ENCODE measurements at regions of chr2 and their contacts with region 1.

Region 1: DNA sequence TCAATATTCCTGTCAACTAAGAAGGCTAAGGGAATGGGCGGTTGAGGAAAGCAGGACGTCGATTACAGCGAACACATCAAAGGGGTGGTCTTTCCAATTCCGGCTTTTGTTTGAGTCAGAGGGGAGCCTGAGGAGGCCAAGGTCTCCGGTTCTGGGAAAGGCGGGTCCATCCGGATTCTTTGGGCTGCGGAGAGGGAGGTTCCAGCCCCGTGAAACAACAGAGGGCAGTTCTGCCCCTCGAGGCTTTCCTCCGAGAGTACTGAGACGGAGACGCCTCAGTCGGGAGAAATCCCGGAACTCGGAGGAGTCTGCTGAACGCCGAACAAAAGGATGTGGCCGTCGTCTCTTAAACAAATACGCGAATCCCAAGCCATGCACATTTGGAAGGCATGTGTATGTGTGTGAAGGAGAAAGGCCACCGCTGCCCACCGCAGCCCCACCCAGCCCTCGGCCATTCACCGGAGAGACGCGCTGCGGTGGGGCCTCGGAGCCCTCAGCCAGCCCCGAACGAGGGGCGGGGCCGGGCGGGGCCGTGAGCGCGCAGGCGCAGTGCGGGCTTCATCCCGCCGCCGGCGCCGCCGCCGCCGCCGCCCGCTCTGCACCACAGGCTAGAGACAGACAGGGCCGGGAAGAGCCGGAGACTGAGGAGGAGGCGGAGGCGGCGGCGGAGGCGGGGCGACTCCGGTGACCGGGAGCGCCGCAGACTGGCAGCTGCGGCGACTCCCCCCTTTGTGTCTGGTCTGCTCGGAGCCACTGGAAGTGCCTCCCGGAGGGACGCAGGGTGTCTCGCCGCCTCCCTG is at the start of gene BMPR2:
- DNase-seq: peak; percentile 90
- ATAC-seq: peak; percentile 86
- H3K4me3 Mint-ChIP-seq: peak within 1 kb of the TSS; percentile 95
- H3K27ac Mint-ChIP-seq: peak within 1 kb of the TSS; percentile 94
- H3K4me1 Mint-ChIP-seq: peaks cover 23% of the 10 kb centered on the region
- H3K27me3 Mint-ChIP-seq: no peaks in the 10 kb centered on the region
- total RNA-seq, gene BMPR2: 7.6 to 10.8 TPM

Region 2: GRCh38 chr2:201451292-201452057 is 924.3 kb before region 1 on chr2 and contains the starts of genes STRADB and TRAK2:
- CTCF ChIA-PET with region 1: no interaction called
- POLR2A ChIA-PET with region 1: no interaction called
- intact Hi-C with region 1: loop called in 1 of 2 experiments (anchors 1 kb)
- DNase-seq: peak; percentile 98
- ATAC-seq: peak; percentile 91
- H3K4me3 Mint-ChIP-seq: peak within 1 kb of the TSS; percentile 95
- H3K27ac Mint-ChIP-seq: peak within 1 kb of the TSS; percentile 97
- H3K4me1 Mint-ChIP-seq: peaks cover 44% of the 10 kb centered on the region
- H3K27me3 Mint-ChIP-seq: no peaks in the 10 kb centered on the region
- total RNA-seq, gene STRADB: 20.5 to 21.8 TPM
- total RNA-seq, gene TRAK2: 22.5 to 25.6 TPM

Region 3: GRCh38 chr2:201780674-201781581 is 594.9 kb before region 1 on chr2 and contains the start of gene ALS2:
- CTCF ChIA-PET with region 1: no interaction called
- POLR2A ChIA-PET with region 1: no interaction called
- intact Hi-C with region 1: loop called in 1 of 2 experiments (anchors 1 kb)
- DNase-seq: peak; percentile 96
- ATAC-seq: peak; percentile 95
- H3K4me3 Mint-ChIP-seq: peak within 1 kb of the TSS; percentile 84
- H3K27ac Mint-ChIP-seq: peak within 1 kb of the TSS; percentile 92
- H3K4me1 Mint-ChIP-seq: peaks cover 25% of the 10 kb centered on the region
- H3K27me3 Mint-ChIP-seq: peaks cover 7% of the 10 kb centered on the region
- total RNA-seq, gene ALS2: 12.3 to 12.4 TPM

Region 4: DNA sequence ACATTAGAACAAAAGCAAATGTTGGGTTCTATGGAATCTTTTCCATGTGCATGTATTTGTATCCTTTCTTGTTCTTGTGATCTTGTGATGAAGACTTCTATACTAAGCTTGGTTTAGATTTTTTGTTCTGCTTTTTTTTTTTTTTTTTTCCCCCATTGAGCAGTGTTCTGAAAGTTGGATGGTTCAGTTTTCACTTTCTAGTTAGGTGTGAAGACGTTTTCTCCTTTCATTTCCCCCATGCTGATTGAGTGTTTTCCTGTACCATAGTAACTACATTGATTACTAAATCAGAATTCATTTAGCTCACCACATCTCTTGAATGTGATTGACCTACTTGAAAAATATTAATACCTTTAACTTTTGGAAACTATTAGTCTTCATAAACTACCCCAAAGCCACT is 76.1 kb before region 1 on chr2:
- CTCF ChIA-PET with region 1: no interaction called
- POLR2A ChIA-PET with region 1: no interaction called
- intact Hi-C with region 1: loop called (anchors 5 kb)
- DNase-seq: no peak
- ATAC-seq: peak; percentile 83
- H3K4me3 Mint-ChIP-seq: no peak overlapping the region
- H3K27ac Mint-ChIP-seq: peak overlapping the region; percentile 86
- H3K4me1 Mint-ChIP-seq: peaks cover 44% of the 10 kb centered on the region
- H3K27me3 Mint-ChIP-seq: no peaks in the 10 kb centered on the region

Region 5: GRCh38 chr2:202911512-202912341 is 535.9 kb after region 1 on chr2 and contains the starts of genes CARF and WDR12:
- CTCF ChIA-PET with region 1: no interaction called
- POLR2A ChIA-PET with region 1: no interaction called
- intact Hi-C with region 1: loop called in 1 of 2 experiments (anchors 1 kb)
- DNase-seq: peak; percentile 96
- ATAC-seq: peak; percentile 84
- H3K4me3 Mint-ChIP-seq: peak within 1 kb of the TSS; percentile 84
- H3K27ac Mint-ChIP-seq: peak within 1 kb of the TSS; percentile 95
- H3K4me1 Mint-ChIP-seq: peaks cover 30% of the 10 kb centered on the region
- H3K27me3 Mint-ChIP-seq: no peaks in the 10 kb centered on the region
- total RNA-seq, gene CARF: 6.2 to 9.0 TPM
- total RNA-seq, gene WDR12: 92.5 to 129 TPM

Region 6: DNA sequence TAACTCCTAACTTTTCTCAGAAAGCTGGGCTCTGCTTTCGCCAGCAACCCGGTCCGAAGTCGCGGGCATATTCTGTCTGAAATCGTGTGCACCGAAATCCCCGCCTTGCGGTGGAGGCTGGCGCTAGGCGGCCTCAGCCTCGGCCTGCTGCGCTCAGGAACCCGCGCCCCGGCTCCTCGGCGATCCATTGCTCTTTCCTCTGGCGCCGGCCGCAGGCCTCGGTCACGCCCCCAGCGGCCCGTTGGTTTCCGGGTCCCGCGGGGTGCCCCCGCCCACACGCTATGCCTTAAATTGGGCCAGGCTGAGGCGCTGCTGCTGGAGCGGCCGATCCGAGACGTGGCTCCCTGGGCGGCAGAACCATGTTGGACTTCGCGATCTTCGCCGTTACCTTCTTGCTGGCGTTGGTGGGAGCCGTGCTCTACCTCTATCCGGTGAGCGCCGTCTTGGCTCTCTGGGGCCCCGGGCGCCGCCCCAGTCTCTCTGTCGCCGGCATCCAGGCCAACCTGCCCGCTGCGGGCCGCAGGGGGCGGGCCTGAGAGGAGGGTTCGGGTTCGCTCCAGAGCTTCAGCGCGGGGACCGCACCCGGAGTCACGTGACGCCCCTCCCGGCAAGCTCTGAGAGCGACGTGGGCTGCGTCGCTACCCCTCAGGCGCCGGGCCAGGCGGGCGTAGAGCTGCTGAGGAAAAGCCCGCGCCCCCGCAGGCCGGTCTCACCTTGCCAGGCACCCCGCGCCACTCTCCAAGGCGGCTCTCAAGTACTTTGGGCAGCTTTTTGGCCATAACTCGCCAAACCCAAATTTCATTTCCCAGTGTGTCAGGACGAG is 863.1 kb after region 1 on chr2 and contains the start of gene CYP20A1:
- CTCF ChIA-PET with region 1: no interaction called
- POLR2A ChIA-PET with region 1: no interaction called
- intact Hi-C with region 1: loop called in 1 of 2 experiments (anchors 1 kb)
- DNase-seq: peak; percentile 99
- ATAC-seq: peak; percentile 84
- H3K4me3 Mint-ChIP-seq: peak within 1 kb of the TSS; percentile 93
- H3K27ac Mint-ChIP-seq: peak within 1 kb of the TSS; percentile 100
- H3K4me1 Mint-ChIP-seq: peaks cover 30% of the 10 kb centered on the region
- H3K27me3 Mint-ChIP-seq: no peaks in the 10 kb centered on the region
- total RNA-seq, gene CYP20A1: 19.0 to 23.3 TPM

Measured in activated CD4-positive, alpha-beta T cell treated with anti-CD3 and anti-CD28 coated beads for 36 hours (primary cell).